ENCODE measurements at regions of chr12 and their contacts with region 1.

Region 1: GRCh38 chr12:66130277-66131066 is at the start of gene LLPH:
- DNase-seq: peak; percentile 95
- H3K4me3 ChIP-seq: peak within 1 kb of the TSS; percentile 72 to 92 (median 84)
- H3K27ac ChIP-seq: peak within 1 kb of the TSS; percentile 62 to 70 (median 67)
- H3K4me1 ChIP-seq: peaks cover 21 to 33% (median 27%) of the 10 kb centered on the region in 4 donors
- H3K27me3 ChIP-seq: no peaks in the 10 kb centered on the region
- CTCF ChIP-seq: no peak
- EP300 ChIP-seq: no peak
- POLR2A ChIP-seq: peak; percentile 51
- total RNA-seq, gene LLPH: 5.8 to 12.6 (median 7.8) TPM

Region 2: DNA sequence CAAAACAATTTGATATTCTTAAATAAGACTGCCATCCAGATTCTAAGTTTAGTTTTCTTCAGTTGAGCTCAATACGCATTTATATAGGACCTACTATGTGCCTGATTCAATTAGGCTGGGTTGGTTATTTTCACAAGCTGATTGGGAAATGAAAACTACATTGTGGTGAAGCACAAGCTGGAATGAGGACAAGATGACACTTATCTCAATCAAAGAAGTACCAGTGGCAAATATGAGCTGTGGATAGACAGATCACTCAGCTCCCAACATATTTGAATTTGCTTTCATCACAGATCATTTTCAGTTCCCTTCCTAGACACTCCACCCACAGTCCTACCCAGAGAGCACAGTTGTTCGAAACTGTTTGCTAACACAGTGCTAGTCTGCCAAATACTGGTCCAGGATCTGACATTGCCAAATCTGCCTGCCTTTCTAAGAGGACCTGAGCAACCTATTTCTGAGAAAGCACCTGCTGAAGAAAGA is 74.6 kb before region 1 on chr12:
- intact Hi-C with region 1: no loop called
- DNase-seq: peak; percentile 47
- H3K4me3 ChIP-seq: no peak overlapping the region
- H3K27ac ChIP-seq: no peak overlapping the region
- H3K4me1 ChIP-seq: no peaks in the 10 kb centered on the region
- H3K27me3 ChIP-seq: no peaks in the 10 kb centered on the region
- CTCF ChIP-seq: no peak
- EP300 ChIP-seq: no peak
- POLR2A ChIP-seq: no peak

Region 3: GRCh38 chr12:66169221-66170170 is 39.0 kb after region 1 on chr12 and contains the start of gene TMBIM4:
- intact Hi-C with region 1: loop called (anchors 5 kb)
- DNase-seq: peak; percentile 96
- H3K4me3 ChIP-seq: peak within 1 kb of the TSS; percentile 78 to 97 (median 88)
- H3K27ac ChIP-seq: peak within 1 kb of the TSS; percentile 98 to 100 (median 98)
- H3K4me1 ChIP-seq: peaks cover 12 to 29% (median 21%) of the 10 kb centered on the region in 4 donors
- H3K27me3 ChIP-seq: no peaks in the 10 kb centered on the region
- CTCF ChIP-seq: peak; percentile 35 to 67 (median 39)
- EP300 ChIP-seq: no peak
- POLR2A ChIP-seq: peak; percentile 63
- total RNA-seq, gene TMBIM4: 92.2 to 156 (median 115) TPM

Region 4: DNA sequence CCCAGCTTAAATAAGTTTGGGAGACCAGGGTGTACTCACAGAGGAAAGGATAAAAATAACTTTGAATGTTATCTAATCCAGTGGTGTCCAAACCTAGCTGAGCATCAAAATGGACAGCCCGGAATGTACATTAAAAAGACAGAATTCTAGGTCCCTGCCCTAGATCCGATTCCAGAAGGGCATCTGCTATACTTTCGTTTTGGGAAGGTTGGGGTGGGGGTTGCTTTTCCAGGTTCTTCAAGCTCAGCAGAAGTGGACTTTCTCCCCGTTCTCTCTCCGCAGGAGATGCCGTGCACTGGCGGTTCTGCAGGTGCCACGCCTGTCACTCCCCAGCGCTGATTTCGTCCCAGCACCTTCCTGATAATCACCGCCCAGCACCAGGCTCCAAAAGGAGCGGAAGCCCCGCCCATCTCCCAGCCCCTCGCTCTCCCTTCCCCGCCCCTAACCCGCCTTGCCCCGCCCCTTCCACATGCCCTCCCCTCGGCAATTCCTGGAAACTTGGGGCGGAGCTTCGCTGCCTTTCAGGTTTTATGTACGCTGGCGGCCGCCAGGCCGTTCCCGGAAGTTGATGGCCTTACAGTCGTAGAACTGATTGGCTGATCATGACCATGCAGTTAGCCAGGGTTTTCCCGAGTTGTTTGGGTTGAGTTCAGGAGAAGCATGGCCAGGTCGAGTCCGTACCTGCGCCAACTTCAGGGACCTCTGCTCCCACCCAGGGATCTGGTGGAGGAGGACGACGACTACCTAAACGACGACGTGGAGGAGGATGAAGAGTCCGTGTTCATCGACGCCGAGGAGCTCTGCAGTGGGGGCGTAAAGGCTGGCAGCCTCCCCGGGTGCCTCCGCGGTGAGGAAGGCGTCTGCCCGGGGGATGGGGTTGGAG is 171.7 kb after region 1 on chr12 and contains the start of gene HELB:
- intact Hi-C with region 1: loop called (anchors 10 kb)
- DNase-seq: peak; percentile 99
- H3K4me3 ChIP-seq: peak within 1 kb of the TSS; percentile 62 to 86 (median 76)
- H3K27ac ChIP-seq: peak within 1 kb of the TSS; percentile 66 to 86 (median 80)
- H3K4me1 ChIP-seq: peaks cover 11 to 29% (median 20%) of the 10 kb centered on the region in 4 donors
- H3K27me3 ChIP-seq: no peaks in the 10 kb centered on the region
- CTCF ChIP-seq: no peak
- EP300 ChIP-seq: no peak
- POLR2A ChIP-seq: no peak
- total RNA-seq, gene HELB: 1.3 to 5.0 (median 1.9) TPM